MCF 10A (cell line): ENCODE measurements at regions of chr1 and their contacts with region 1.

Region 1: DNA sequence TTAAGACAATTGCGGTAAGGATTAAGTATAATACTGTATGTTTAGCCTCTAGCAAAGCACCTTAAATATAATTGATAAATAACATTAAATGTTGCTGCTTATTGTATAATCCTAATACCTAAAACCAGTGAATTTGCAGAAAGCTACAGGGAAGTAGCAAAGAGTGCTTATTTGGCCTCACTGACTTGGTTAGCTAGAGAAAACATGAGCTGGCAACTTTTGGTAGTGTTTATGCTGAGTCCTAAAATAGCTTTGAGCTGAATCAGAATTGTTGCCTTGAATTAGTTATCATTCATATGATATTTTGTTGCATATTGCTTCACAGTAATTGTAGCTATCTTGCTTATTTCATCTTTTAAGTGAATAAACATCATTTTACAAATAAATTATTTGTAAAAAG is 3.5 kb downstream of the TRIM67 start:
- DNase-seq: no peak
- H3K4me3 Mint-ChIP-seq: no peak overlapping the region
- H3K27ac Mint-ChIP-seq: no peak overlapping the region
- H3K4me1 Mint-ChIP-seq: no peaks in the 10 kb centered on the region
- H3K27me3 Mint-ChIP-seq: peaks cover 34% of the 10 kb centered on the region
- CTCF ChIP-seq: no peak

Region 2: GRCh38 chr1:231177936-231178335 is 12.6 kb after region 1 on chr1:
- CTCF ChIA-PET with region 1: interaction called, 4 read pairs
- POLR2A ChIA-PET with region 1: interaction called, 16 read pairs
- intact Hi-C with region 1: no loop called
- DNase-seq: no peak
- H3K4me3 Mint-ChIP-seq: no peak overlapping the region
- H3K27ac Mint-ChIP-seq: no peak overlapping the region
- H3K4me1 Mint-ChIP-seq: no peaks in the 10 kb centered on the region
- H3K27me3 Mint-ChIP-seq: peaks cover 63% of the 10 kb centered on the region
- CTCF ChIP-seq: no peak